HCT116 (cell line): ENCODE measurements at regions of chr14 and their contacts with region 1.

Region 1: GRCh38 chr14:95701846-95702221 is 12.1 kb downstream of the TCL1A start:
- DNase-seq: no peak
- ATAC-seq: no peak
- H3K4me3 ChIP-seq: no peak overlapping the region
- H3K27ac ChIP-seq: no peak overlapping the region
- H3K4me1 ChIP-seq: peaks cover 0 to under 1% of the 10 kb centered on the region in 2 experiments; a peak in 1 of 4 replicates
- H3K27me3 ChIP-seq: peaks cover 67% of the 10 kb centered on the region
- CTCF ChIP-seq: no peak
- POLR2A ChIP-seq: no peak
- RAD21 ChIP-seq: no peak

Region 2: DNA sequence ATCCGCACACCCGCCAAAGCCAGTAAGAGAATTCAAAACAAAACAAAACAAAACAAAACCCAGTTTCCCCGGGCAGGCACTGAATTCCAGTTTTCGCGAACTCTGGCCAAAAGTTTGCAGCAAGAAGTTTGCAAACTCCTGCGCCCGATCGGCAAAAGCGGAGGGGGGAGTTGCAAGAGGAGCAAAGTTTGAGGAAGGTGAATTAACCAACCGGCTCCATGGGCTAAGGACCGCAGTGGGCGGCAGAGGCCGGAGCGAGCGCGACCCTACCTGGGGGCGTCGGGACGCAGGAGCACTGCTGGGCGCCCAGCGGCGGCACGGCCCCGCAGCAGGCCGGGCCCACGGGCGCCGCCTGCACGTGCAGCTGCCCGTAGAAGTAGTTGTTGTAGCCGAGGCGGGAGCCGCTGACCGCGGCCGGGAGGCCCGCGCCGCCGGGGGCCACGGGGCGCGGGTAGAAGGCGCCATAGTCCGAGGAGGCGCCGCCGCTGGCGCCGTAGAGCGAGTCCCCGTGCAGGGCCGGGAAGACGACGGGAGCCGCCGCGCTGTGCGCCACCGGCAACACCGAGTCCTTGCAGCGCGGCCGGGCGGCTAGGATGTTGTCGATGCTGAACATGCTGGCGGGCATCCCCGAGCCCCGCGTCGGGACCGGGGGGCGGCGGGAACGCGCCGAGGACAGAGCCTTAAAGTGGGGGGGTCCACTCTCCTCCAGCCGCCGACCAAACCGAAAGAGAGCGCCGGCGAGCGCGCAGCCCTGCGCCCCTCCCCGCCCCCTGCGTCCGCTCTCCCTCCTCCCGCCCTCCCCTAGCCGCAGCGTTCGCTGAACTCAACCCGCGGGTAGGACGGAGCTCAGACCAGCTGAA is 932.2 kb before region 1 on chr14 and contains the start of gene GSC:
- CTCF ChIA-PET with region 1: no interaction called
- POLR2A ChIA-PET with region 1: no interaction called
- RAD21 ChIA-PET with region 1: no interaction called
- intact Hi-C with region 1: no loop called
- DNase-seq: no peak
- ATAC-seq: no peak
- H3K4me3 ChIP-seq: no peak within 1 kb of the TSS
- H3K27ac ChIP-seq: no peak within 1 kb of the TSS
- H3K4me1 ChIP-seq: peaks cover 0 to 4% of the 10 kb centered on the region in 2 experiments; a peak in 1 of 4 replicates
- H3K27me3 ChIP-seq: peaks cover 6% of the 10 kb centered on the region; the same call in 1 of the 2 replicates
- CTCF ChIP-seq: no peak
- POLR2A ChIP-seq: no peak
- RAD21 ChIP-seq: no peak
- total RNA-seq, gene GSC: not detected

Region 3: DNA sequence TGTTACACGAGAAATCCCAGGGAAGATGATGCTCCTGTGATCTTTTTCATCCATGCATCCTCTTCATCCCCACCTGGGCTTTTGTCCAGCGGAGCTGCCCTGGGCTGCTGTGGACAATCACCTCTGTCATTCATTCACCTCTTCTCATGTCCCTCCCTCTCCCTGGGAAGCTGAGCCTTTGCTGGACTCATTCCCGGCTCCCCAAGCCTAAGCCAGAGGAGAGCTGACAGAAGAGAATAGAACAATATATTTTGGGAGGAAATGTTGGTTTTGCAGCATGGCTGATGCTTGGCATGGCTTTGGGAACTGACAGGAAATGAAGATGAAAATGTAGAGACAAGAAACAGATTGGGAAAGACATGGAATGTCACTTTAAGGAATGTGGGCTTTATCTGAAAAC is 721.9 kb before region 1 on chr14:
- CTCF ChIA-PET with region 1: no interaction called
- POLR2A ChIA-PET with region 1: no interaction called
- RAD21 ChIA-PET with region 1: no interaction called
- intact Hi-C with region 1: loop called (anchors 5 kb)
- DNase-seq: no peak
- ATAC-seq: no peak
- H3K4me3 ChIP-seq: no peak overlapping the region
- H3K27ac ChIP-seq: no peak overlapping the region
- H3K4me1 ChIP-seq: no peaks in the 10 kb centered on the region
- H3K27me3 ChIP-seq: peaks cover 54% of the 10 kb centered on the region
- CTCF ChIP-seq: no peak
- POLR2A ChIP-seq: no peak
- RAD21 ChIP-seq: no peak